Activated CD4-positive, alpha-beta T cell treated with anti-CD3 and anti-CD28 coated beads, Interleukin-2, amount 10 ng/mL, durations not matched to agents 24 days and 14 days (primary cell): ENCODE measurements at regions of chr19 and their contacts with region 1.

Region 1: GRCh38 chr19:41641879-41642485 is 15.1 kb upstream of the CEACAM4 start:
- DNase-seq: peak; percentile 90
- H3K4me3 Mint-ChIP-seq: no peak overlapping the region
- H3K27ac Mint-ChIP-seq: no peak overlapping the region
- H3K4me1 Mint-ChIP-seq: no peaks in the 10 kb centered on the region
- H3K27me3 Mint-ChIP-seq: peaks cover 5% of the 10 kb centered on the region

Region 2: GRCh38 chr19:41420101-41420880 is 221.7 kb before region 1 on chr19:
- intact Hi-C with region 1: no loop called
- DNase-seq: no peak
- H3K4me3 Mint-ChIP-seq: no peak overlapping the region
- H3K27ac Mint-ChIP-seq: no peak overlapping the region
- H3K4me1 Mint-ChIP-seq: peaks cover 1% of the 10 kb centered on the region
- H3K27me3 Mint-ChIP-seq: no peaks in the 10 kb centered on the region

Region 3: DNA sequence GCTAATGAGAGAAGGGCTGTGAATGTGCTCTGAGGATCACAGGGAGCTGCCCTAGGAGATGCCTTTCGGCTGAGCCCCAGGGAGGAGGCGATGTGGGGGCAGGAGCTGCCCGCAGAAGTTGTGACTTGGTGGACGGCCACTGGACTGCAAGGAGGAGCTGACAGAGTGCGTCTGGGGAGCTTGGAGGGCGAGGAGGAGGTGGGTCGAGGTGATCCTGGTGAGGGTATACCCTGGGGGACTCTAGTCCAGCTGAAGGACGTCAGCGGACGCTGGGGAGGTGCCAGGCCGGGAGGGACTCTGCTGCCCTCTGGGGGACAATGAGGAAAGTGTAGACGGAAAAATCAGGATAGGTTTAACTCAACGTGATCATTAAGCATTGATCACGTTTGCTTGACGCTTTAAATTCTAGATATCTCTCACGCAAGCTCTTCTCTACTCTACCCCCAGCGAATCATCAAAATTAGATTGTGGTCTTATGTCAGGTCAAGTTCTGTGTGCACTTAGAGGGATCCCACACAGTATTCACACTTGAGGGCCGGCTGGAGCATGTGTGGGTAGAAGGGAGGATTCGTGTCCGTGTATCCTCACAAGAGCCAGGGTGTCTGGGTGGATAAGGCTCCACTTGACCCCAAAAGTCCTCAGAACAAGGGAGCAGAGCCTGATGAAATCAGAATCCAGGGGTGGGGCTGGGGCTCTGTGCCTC is 49.4 kb after region 1 on chr19:
- intact Hi-C with region 1: loop called (anchors 5 kb)
- DNase-seq: peak; percentile 77
- H3K4me3 Mint-ChIP-seq: no peak overlapping the region
- H3K27ac Mint-ChIP-seq: no peak overlapping the region
- H3K4me1 Mint-ChIP-seq: peaks cover 3% of the 10 kb centered on the region
- H3K27me3 Mint-ChIP-seq: peaks cover 21% of the 10 kb centered on the region

Region 4: GRCh38 chr19:41785653-41786052 is 143.7 kb after region 1 on chr19:
- intact Hi-C with region 1: no loop called
- DNase-seq: peak; percentile 91
- H3K4me3 Mint-ChIP-seq: no peak overlapping the region
- H3K27ac Mint-ChIP-seq: no peak overlapping the region
- H3K4me1 Mint-ChIP-seq: peaks cover 17% of the 10 kb centered on the region
- H3K27me3 Mint-ChIP-seq: peaks cover 54% of the 10 kb centered on the region